ENCODE measurements at regions of chr2 and their contacts with region 1.

Region 1: GRCh38 chr2:162007447-162008040 is 66.5 kb downstream of the DPP4 start:
- DNase-seq: no peak
- H3K4me3 ChIP-seq: no peak overlapping the region
- H3K27ac ChIP-seq: no peak overlapping the region
- H3K4me1 ChIP-seq: no peaks in the 10 kb centered on the region
- H3K27me3 ChIP-seq: no peaks in the 10 kb centered on the region
- CTCF ChIP-seq: peak in 5 of 6 experiments; percentile 32 to 70 (median 51)
- POLR2A ChIP-seq: no peak

Region 2: DNA sequence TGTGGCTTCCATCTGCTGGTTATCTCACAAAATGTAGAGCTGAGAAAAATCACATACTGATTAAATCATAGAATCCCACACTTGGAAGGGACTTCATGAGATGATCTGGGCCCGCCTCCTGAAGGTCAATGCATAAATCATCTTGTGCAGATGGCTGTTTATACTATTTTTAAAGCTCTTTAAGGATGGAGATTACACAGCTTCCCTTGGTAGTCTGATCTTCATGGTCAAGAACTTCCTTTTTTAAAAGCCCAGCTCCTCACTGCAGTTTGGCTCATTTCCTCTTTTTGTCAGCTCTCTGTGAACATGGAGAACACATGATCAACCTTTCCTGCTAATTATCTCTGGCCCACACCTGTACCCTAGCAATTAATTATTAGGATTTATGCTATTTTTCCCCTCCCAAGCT is 118.6 kb after region 1 on chr2:
- intact Hi-C with region 1: loop called (anchors 5 kb)
- DNase-seq: no peak
- H3K4me3 ChIP-seq: no peak overlapping the region
- H3K27ac ChIP-seq: no peak overlapping the region
- H3K4me1 ChIP-seq: no peaks in the 10 kb centered on the region
- H3K27me3 ChIP-seq: no peaks in the 10 kb centered on the region
- CTCF ChIP-seq: no peak
- POLR2A ChIP-seq: no peak

Measured in thyroid gland (tissue), 4 donors.